SK-N-SH (cell line): ENCODE measurements at regions of chr11 and their contacts with region 1.

Region 1: GRCh38 chr11:66222358-66223149 is 45.9 kb upstream of the RAB1B start:
- DNase-seq: peak; percentile 91
- H3K4me3 ChIP-seq: no peak overlapping the region; a peak in 1 of 4 replicates
- H3K27ac ChIP-seq: no peak overlapping the region
- H3K4me1 ChIP-seq: peaks cover 0 to 6% of the 10 kb centered on the region in 2 experiments; a peak in 1 of 4 replicates
- H3K27me3 ChIP-seq: no peaks in the 10 kb centered on the region
- CTCF ChIP-seq: peak; percentile 98
- EP300 ChIP-seq: no peak
- RAD21 ChIP-seq: peak; percentile 91

Region 2: GRCh38 chr11:66195867-66196266 is 26.7 kb before region 1 on chr11:
- CTCF ChIA-PET with region 1: interaction called, 10 read pairs
- POLR2A ChIA-PET with region 1: no interaction called
- DNase-seq: no peak
- H3K4me3 ChIP-seq: no peak overlapping the region
- H3K27ac ChIP-seq: no peak overlapping the region
- H3K4me1 ChIP-seq: peaks cover 0 to 7% of the 10 kb centered on the region in 2 experiments; a peak in 2 of 4 replicates
- H3K27me3 ChIP-seq: no peaks in the 10 kb centered on the region
- CTCF ChIP-seq: no peak
- EP300 ChIP-seq: no peak
- RAD21 ChIP-seq: no peak

Region 3: DNA sequence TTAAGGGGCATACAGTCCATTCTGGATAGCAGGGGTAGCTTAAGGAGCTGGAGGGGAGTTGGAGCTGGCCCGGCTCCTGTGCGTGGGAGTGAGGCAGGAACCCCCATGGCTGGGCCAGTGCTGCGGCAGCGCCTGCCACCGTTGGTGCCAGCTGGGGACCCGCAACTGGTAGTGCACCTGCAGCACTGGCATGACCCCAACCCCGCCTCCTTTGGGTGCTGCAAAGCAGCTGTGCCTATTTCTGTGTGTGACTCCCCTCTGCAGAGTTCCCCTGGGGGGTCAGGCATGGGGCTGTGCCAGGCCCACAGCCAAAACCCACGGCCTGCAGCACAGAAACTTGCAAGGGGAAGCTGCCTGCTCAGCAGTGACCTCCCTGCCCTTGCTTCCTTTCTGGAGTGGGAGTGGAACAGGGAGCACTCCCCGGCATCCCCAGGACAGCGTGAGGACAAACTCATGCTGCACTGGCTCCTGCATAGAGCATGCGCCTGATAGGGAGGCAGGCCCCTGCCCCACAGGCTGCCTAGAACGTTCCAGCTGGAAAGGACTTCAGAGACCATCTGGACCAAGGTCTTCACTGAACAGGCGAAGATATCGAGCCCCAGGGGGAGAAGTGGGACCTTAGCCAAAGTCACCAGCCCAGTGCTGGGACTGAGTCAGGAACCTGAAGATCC is 19.7 kb after region 1 on chr11:
- CTCF ChIA-PET with region 1: interaction called, 34 read pairs
- POLR2A ChIA-PET with region 1: no interaction called
- DNase-seq: no peak
- H3K4me3 ChIP-seq: no peak overlapping the region
- H3K27ac ChIP-seq: no peak overlapping the region
- H3K4me1 ChIP-seq: no peaks in the 10 kb centered on the region
- H3K27me3 ChIP-seq: no peaks in the 10 kb centered on the region
- CTCF ChIP-seq: no peak
- EP300 ChIP-seq: no peak
- RAD21 ChIP-seq: no peak

Region 4: DNA sequence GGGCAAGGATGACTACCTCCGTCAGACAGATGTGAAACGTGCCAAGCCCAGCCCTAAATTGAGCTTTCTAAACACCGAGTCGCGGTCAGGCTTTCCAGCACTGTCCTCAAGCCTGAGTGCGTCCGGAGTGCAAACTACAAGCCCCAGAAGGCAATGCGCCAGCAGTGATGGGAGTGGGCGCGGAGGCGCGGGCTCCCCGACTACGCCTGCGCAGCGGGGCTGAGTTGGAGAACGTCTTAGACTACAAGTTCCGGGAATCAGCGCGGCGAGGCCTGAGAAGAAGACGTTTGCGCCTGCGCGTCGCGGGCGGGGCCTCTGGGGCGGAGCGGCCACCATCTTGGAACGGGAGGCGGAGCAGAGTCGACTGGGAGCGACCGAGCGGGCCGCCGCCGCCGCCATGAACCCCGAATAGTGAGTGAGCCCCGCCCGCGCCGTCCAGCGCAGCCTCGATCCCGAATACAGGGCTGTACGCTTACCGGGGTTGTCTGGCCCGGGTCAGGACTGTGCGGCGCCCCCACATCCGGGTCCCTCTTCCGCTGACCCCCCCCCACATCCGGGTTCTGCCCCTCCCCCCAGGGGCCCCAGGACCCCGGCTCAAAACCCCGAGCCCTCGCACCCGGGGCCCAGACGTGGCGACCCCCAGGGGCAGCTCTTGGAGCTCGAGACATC is 45.9 kb after region 1 on chr11 and contains the start of gene RAB1B:
- CTCF ChIA-PET with region 1: interaction called, 24 read pairs
- POLR2A ChIA-PET with region 1: interaction called, 5 read pairs
- DNase-seq: peak; percentile 96
- H3K4me3 ChIP-seq: peak within 1 kb of the TSS; percentile 85 to 89
- H3K27ac ChIP-seq: peak within 1 kb of the TSS; percentile 84 to 97
- H3K4me1 ChIP-seq: peaks cover 11 to 14% of the 10 kb centered on the region in 2 experiments; a peak in 2 of 4 replicates
- H3K27me3 ChIP-seq: no peaks in the 10 kb centered on the region
- CTCF ChIP-seq: no peak
- EP300 ChIP-seq: no peak
- RAD21 ChIP-seq: no peak
- polyA plus RNA-seq, gene RAB1B: 204 and 208 TPM in 2 replicates

Region 5: GRCh38 chr11:66288671-66289547 is 66.4 kb after region 1 on chr11 and contains the start of gene YIF1A:
- CTCF ChIA-PET with region 1: interaction called, 25 read pairs
- POLR2A ChIA-PET with region 1: no interaction called
- DNase-seq: peak; percentile 98
- H3K4me3 ChIP-seq: peak within 1 kb of the TSS; percentile 88 to 90
- H3K27ac ChIP-seq: peak within 1 kb of the TSS; percentile 93 to 97
- H3K4me1 ChIP-seq: peaks cover 7 to 36% of the 10 kb centered on the region in 2 experiments; a peak in 2 of 4 replicates
- H3K27me3 ChIP-seq: no peaks in the 10 kb centered on the region
- CTCF ChIP-seq: no peak
- EP300 ChIP-seq: no peak
- RAD21 ChIP-seq: no peak
- polyA plus RNA-seq, gene YIF1A: 115 and 123 TPM in 2 replicates

Region 6: GRCh38 chr11:66454249-66454648 is 231.7 kb after region 1 on chr11:
- CTCF ChIA-PET with region 1: no interaction called
- POLR2A ChIA-PET with region 1: no interaction called
- DNase-seq: no peak
- H3K4me3 ChIP-seq: no peak overlapping the region
- H3K27ac ChIP-seq: no peak overlapping the region
- H3K4me1 ChIP-seq: no peaks in the 10 kb centered on the region
- H3K27me3 ChIP-seq: no peaks in the 10 kb centered on the region; the same call in 1 of the 2 replicates
- CTCF ChIP-seq: no peak
- EP300 ChIP-seq: no peak
- RAD21 ChIP-seq: no peak